A549 (cell line): ENCODE measurements at regions of chr14 and their contacts with region 1.

Region 1: DNA sequence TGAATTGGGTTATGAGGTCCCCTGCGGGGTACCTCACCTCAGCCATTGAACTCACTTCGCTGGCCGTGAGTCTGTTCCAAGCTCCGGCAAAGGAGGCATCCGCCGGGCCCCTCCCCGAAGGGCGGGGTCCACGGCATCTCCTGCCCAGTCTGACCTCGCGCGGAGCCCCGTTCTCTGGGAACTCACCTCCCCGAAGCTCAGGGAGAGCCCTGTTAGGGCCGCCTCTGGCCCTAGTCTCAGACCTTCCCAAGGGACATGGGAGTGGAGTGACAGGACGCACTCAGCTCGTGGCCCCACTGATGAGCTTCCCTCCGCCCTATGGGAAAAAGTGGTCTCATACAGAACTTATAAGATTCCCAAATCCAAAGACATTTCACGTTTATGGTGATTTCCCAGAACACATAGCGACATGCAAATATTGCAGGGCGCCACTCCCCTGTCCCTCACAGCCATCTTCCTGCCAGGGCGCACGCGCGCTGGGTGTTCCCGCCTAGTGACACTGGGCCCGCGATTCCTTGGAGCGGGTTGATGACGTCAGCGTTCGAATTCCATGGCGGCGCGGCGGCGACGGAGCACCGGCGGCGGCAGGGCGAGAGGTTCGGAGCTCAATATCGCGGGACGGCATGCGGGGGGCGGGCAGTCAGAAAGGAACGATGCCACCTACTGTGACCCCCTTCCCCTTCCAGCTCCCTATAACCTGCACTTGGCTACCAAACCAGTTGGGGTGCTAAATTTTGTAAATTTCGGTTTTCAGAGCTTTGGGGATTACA is at the start of gene PARP2:
- DNase-seq: peak; percentile 96 to 99
- ATAC-seq: peak; percentile 99
- H3K4me3 ChIP-seq: peak within 1 kb of the TSS; percentile 82
- H3K27ac ChIP-seq: peak within 1 kb of the TSS; percentile 95 to 96
- H3K4me1 ChIP-seq: peaks cover 5% of the 10 kb centered on the region; the same call in 1 of the 3 replicates
- CTCF ChIP-seq: no peak
- EP300 ChIP-seq: no peak
- POLR2A ChIP-seq: peak; percentile 96
- RAD21 ChIP-seq: 0 out of 5 replicates have a peak, but pooled peaks of 1 of the 2 experiments have one; percentile 13
- polyA plus RNA-seq, gene PARP2: 39.8 and 42.3 TPM in 2 replicates

Region 2: GRCh38 chr14:20305265-20306078 is 37.8 kb before region 1 on chr14 and contains the start of gene TTC5:
- CTCF ChIA-PET with region 1: interaction called, 4 read pairs
- POLR2A ChIA-PET with region 1: interaction called, 10 read pairs
- DNase-seq: peak; percentile 79 to 92
- ATAC-seq: peak; percentile 95 to 96
- H3K4me3 ChIP-seq: peak within 1 kb of the TSS; percentile 73
- H3K27ac ChIP-seq: peak within 1 kb of the TSS; percentile 78 to 83
- H3K4me1 ChIP-seq: peaks cover 14% of the 10 kb centered on the region; the same call in 2 of the 3 replicates
- CTCF ChIP-seq: peak; percentile 86
- EP300 ChIP-seq: no peak
- POLR2A ChIP-seq: peak; percentile 49
- RAD21 ChIP-seq: peak; percentile 29 to 41; a peak in 3 of 5 replicates
- polyA plus RNA-seq, gene TTC5: 21.9 and 31.2 TPM in 2 replicates

Region 3: GRCh38 chr14:20332788-20333493 is 10.3 kb before region 1 on chr14 and contains the start of gene CCNB1IP1:
- CTCF ChIA-PET with region 1: interaction called, 60 read pairs
- POLR2A ChIA-PET with region 1: interaction called, 53 read pairs
- DNase-seq: peak; percentile 93 to 95
- ATAC-seq: peak; percentile 99 to 100
- H3K4me3 ChIP-seq: peak within 1 kb of the TSS; percentile 84
- H3K27ac ChIP-seq: peak within 1 kb of the TSS; percentile 81 to 87
- H3K4me1 ChIP-seq: peaks cover 36% of the 10 kb centered on the region
- CTCF ChIP-seq: no peak
- EP300 ChIP-seq: no peak
- POLR2A ChIP-seq: peak; percentile 36; the same call in 1 of the 2 replicates
- RAD21 ChIP-seq: no peak
- polyA plus RNA-seq, gene CCNB1IP1: 98.2 and 121 TPM in 2 replicates

Region 4: DNA sequence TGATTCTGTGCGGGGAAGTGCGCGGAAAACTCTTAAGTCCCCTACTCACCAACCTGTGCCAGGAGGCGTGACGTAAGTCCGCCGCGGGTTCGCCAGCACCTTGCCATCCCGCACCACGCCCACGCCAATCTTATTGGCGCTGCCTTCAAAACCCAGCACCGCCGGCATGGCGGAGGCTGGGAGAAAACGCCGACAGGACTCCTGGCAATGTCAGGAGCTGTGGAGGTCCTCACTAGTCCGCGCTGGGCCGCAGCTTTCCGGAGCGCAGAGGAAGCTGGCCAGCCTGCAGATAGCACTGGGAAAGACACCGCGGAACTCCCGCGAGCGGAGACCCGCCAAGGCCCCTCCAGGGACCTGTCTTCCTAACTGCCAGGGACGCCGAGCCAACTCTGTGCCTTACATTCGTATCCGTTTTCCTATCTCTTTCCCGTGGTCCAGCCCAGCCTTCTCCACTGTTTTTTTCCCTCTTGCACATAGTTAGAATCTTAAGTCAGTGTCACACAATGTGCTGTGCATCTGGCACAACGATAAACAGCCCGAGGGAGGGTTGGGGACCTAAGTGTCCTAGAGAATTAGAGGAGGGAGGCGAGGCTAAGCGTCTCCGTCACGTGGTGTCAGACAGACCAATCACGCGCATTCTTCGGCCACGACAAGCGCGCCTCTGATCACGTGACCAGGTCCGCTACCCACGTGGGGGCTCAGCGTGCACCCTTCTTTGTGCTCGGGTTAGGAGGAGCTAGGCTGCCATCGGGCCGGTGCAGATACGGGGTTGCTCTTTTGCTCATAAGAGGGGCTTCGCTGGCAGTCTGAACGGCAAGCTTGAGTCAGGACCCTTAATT is 111.5 kb after region 1 on chr14 and contains the starts of genes APEX1 and OSGEP:
- CTCF ChIA-PET with region 1: no interaction called
- POLR2A ChIA-PET with region 1: interaction called, 38 read pairs
- DNase-seq: peak; percentile 98 to 100
- ATAC-seq: peak; percentile 89 to 91
- H3K4me3 ChIP-seq: peak within 1 kb of the TSS; percentile 73
- H3K27ac ChIP-seq: peak within 1 kb of the TSS; percentile 85 to 96
- H3K4me1 ChIP-seq: peaks cover 24% of the 10 kb centered on the region
- CTCF ChIP-seq: no peak
- EP300 ChIP-seq: no peak
- POLR2A ChIP-seq: peak; percentile 75
- RAD21 ChIP-seq: no peak
- polyA plus RNA-seq, gene APEX1: 324 and 419 TPM in 2 replicates
- polyA plus RNA-seq, gene OSGEP: 32.8 and 33.2 TPM in 2 replicates

Region 5: GRCh38 chr14:20469242-20469889 is 126.1 kb after region 1 on chr14 and contains the start of gene PNP:
- CTCF ChIA-PET with region 1: no interaction called
- POLR2A ChIA-PET with region 1: interaction called, 22 read pairs
- DNase-seq: peak; percentile 92 to 99
- ATAC-seq: peak; percentile 94 to 98
- H3K4me3 ChIP-seq: peak within 1 kb of the TSS; percentile 72
- H3K27ac ChIP-seq: peak within 1 kb of the TSS; percentile 80 to 95
- H3K4me1 ChIP-seq: peaks cover 27% of the 10 kb centered on the region
- CTCF ChIP-seq: no peak
- EP300 ChIP-seq: no peak
- POLR2A ChIP-seq: peak; percentile 100
- RAD21 ChIP-seq: no peak; a peak in 1 of 5 replicates
- polyA plus RNA-seq, gene PNP: 111 and 129 TPM in 2 replicates

Region 6: GRCh38 chr14:20682435-20683124 is 339.3 kb after region 1 on chr14:
- CTCF ChIA-PET with region 1: interaction called, 4 read pairs
- POLR2A ChIA-PET with region 1: interaction called, 46 read pairs
- DNase-seq: peak; percentile 81 to 96
- ATAC-seq: peak; percentile 67 to 77
- H3K4me3 ChIP-seq: peak overlapping the region; percentile 58
- H3K27ac ChIP-seq: peak overlapping the region; percentile 95
- H3K4me1 ChIP-seq: peaks cover 33% of the 10 kb centered on the region
- CTCF ChIP-seq: no peak
- EP300 ChIP-seq: no peak
- POLR2A ChIP-seq: peak; percentile 80
- RAD21 ChIP-seq: no peak